ENCODE measurements at regions of chr17 and their contacts with region 1.

Region 1: GRCh38 chr17:73231841-73232586 is 29.7 kb downstream of the CPSF4L start:
- DNase-seq: peak; percentile 92 to 98 (median 96)
- H3K4me3 ChIP-seq: peak overlapping the region; percentile 74 to 100 (median 98)
- H3K27ac ChIP-seq: peak overlapping the region in 56 of 59 donors; percentile 19 to 94 (median 84)
- H3K27me3 ChIP-seq: no peaks in the 10 kb centered on the region
- CTCF ChIP-seq: peak in 53 of 56 donors; percentile 21 to 74 (median 53)

Region 2: DNA sequence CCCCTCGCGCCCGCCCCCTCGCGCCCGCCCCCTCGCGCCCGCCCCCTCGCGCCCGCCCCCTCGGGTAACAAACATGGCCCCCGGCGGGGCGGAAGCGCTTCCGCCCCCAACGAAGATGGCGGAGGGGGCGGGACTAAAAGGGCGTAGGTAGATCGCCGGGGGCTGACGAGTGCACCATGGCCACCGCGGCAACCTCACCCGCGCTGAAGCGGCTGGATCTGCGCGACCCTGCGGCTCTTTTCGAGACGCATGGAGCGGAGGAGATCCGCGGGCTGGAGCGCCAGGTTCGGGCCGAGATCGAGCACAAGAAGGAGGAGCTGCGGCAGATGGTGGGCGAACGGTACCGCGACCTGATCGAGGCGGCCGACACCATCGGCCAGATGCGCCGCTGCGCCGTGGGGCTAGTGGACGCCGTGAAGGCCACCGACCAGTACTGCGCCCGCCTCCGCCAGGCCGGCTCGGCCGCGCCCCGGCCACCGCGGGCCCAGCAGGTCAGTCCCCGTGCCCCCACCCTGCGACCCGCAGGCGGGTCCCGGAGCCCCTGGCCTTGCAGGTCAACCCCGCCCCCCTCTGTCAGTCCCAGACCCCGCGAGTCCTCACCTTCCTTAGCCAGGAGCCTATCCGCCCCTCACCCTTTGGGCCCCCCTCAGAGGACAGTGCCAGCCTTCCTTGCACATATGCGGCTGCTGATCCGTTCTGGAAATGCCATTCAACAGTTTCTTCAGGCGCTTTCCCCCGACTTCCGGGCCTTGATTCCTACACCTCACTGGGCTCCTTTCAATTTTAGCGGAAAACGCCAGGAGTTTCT is 38.9 kb before region 1 on chr17 and contains the start of gene COG1:
- intact Hi-C with region 1: loop called (anchors 1 to 2 kb)
- DNase-seq: peak; percentile 51 to 85 (median 74)
- H3K4me3 ChIP-seq: peak within 1 kb of the TSS; percentile 73 to 100 (median 95)
- H3K27ac ChIP-seq: peak within 1 kb of the TSS; percentile 47 to 94 (median 86)
- H3K27me3 ChIP-seq: no peaks in the 10 kb centered on the region
- CTCF ChIP-seq: peak in 6 of 56 donors; percentile 3 to 39 (median 11)
- total RNA-seq, gene COG1: 48.4 to 137 (median 85.4) TPM